ENCODE measurements at regions of chr21 and their contacts with region 1.

Region 1: DNA sequence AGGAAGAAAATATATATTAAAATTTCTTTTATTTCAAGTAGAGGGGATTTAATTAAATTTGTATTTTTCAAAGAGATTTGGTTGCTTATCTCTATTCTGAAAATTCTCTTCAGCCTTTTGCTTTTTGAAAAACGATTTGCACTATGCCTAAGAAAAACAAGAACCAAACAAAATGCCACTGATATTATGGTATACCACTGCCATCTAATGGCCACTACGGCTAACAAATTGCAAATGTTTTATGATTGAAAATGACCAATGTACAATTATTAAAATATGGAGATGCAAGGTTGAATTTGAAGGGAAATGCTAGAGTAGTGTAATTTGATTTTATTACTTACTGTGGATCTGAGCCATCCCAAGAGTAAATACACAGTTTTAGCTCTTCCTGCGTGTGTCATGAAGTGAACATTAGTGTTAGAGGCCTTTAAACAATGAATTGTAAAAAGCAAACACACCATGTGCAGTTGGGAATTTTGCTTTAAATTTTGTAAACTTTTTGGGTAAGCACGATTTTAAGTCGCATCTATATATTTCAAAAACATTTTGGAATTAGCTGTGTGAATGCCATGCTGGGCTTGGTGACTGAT is 137.4 kb upstream of the USP25 start:
- DNase-seq: no peak
- H3K4me3 Mint-ChIP-seq: no peak overlapping the region
- H3K27ac Mint-ChIP-seq: no peak overlapping the region
- H3K4me1 Mint-ChIP-seq: no peaks in the 10 kb centered on the region
- H3K27me3 Mint-ChIP-seq: peaks cover 13% of the 10 kb centered on the region

Region 2: DNA sequence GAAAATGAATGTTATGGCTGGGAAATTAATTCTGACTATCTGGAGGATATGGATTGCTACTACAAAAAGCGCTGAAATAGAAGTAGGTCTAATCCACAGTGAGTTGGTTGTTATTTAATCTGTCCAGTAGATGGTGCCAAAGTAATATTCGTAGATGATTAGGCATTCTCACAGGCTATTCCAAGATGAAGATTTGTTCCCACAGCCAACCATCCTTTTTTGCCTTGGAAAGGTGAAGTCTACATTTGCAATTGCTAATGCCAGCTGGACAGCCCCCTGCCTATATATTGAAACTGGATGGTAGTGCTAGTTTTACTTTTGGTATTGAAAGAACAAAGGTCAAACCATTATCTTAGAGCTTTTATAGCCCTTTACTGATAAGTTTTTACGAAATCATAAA is 1332.6 kb before region 1 on chr21:
- intact Hi-C with region 1: loop called (anchors 2 kb)
- DNase-seq: no peak
- H3K4me3 Mint-ChIP-seq: no peak overlapping the region
- H3K27ac Mint-ChIP-seq: no peak overlapping the region
- H3K4me1 Mint-ChIP-seq: no peaks in the 10 kb centered on the region
- H3K27me3 Mint-ChIP-seq: peaks cover 10% of the 10 kb centered on the region

Region 3: GRCh38 chr21:14403681-14404318 is 1188.6 kb before region 1 on chr21:
- intact Hi-C with region 1: loop called (anchors 1 kb)
- DNase-seq: no peak
- H3K4me3 Mint-ChIP-seq: no peak overlapping the region
- H3K27ac Mint-ChIP-seq: no peak overlapping the region
- H3K4me1 Mint-ChIP-seq: peaks cover 5% of the 10 kb centered on the region
- H3K27me3 Mint-ChIP-seq: no peaks in the 10 kb centered on the region

Region 4: GRCh38 chr21:14773777-14774345 is 818.5 kb before region 1 on chr21:
- intact Hi-C with region 1: loop called (anchors 5 kb)
- DNase-seq: peak; percentile 45
- H3K4me3 Mint-ChIP-seq: no peak overlapping the region
- H3K27ac Mint-ChIP-seq: no peak overlapping the region
- H3K4me1 Mint-ChIP-seq: no peaks in the 10 kb centered on the region
- H3K27me3 Mint-ChIP-seq: peaks cover 2% of the 10 kb centered on the region

Region 5: DNA sequence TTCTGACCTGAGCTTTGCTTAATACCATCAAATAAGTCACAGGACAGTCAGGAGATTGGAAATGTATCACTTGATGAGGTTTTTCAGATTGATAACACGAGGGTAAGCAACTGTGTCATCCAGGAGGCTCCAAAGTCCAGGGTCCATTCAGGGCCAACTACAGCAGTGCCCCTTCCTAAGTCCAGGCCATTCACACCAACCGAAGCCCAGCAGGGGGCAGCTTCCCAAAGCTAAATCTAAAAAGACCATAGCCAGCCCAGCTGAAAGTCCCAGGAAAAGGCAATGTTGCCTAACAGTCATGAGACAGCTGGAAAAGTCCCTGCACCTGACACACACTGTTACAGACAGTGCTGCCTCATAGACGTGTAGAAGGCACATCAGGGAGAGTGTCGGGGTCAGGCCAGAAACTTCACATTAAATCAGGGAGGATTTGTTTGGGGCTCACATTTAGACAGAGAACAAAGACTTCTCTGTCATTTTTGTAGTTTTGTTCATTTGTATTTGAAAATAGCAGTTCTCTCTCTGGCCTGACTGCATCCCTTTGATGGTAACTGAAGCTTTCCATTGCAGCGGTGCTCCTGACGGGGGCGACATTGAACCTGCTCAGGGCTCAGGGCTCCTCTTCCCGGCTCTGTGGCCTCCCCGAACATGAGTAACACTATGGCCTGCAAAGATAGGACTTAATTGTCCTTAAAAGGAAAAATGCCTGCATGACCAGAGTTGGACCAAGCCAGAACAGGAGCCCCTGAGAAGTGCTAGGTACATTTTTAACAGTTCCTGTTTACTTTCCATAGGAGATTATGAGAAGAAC is 728.0 kb before region 1 on chr21:
- intact Hi-C with region 1: loop called (anchors 2 kb)
- DNase-seq: peak; percentile 16
- H3K4me3 Mint-ChIP-seq: no peak overlapping the region
- H3K27ac Mint-ChIP-seq: no peak overlapping the region
- H3K4me1 Mint-ChIP-seq: peaks cover 5% of the 10 kb centered on the region
- H3K27me3 Mint-ChIP-seq: no peaks in the 10 kb centered on the region

Region 6: GRCh38 chr21:15293240-15293639 is 299.1 kb before region 1 on chr21:
- intact Hi-C with region 1: no loop called
- DNase-seq: no peak
- H3K4me3 Mint-ChIP-seq: no peak overlapping the region
- H3K27ac Mint-ChIP-seq: no peak overlapping the region
- H3K4me1 Mint-ChIP-seq: no peaks in the 10 kb centered on the region
- H3K27me3 Mint-ChIP-seq: no peaks in the 10 kb centered on the region